GM23248 (cell line): ENCODE measurements at regions of chr10 and their contacts with region 1.

Region 1: DNA sequence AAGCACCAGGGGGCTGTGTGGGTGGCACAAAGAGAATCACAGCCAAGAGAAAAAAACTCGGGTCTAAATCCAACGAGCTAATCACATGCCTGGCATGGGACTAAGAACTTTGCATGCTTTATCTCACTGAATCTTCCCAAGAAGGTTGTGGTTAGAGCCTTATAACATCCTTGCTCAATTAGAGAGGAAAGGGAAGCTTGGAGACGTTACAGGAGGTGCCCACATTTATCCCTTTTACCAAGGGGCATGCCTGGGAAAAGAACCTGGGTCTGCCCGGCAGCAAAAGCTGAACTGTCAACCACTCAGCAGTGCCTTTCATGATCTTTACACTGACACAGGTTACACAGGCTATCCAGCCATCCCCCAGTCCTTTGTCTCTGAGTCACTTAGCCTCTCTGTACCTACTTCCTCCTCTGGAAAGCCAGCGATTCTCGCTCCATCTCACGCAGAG is 190.1 kb downstream of the PRPF18 start:
- DNase-seq: peak; percentile 73
- H3K4me3 ChIP-seq: no peak overlapping the region
- H3K27ac ChIP-seq: peak overlapping the region; percentile 68
- H3K4me1 ChIP-seq: peaks cover 27% of the 10 kb centered on the region
- H3K27me3 ChIP-seq: no peaks in the 10 kb centered on the region

Region 2: DNA sequence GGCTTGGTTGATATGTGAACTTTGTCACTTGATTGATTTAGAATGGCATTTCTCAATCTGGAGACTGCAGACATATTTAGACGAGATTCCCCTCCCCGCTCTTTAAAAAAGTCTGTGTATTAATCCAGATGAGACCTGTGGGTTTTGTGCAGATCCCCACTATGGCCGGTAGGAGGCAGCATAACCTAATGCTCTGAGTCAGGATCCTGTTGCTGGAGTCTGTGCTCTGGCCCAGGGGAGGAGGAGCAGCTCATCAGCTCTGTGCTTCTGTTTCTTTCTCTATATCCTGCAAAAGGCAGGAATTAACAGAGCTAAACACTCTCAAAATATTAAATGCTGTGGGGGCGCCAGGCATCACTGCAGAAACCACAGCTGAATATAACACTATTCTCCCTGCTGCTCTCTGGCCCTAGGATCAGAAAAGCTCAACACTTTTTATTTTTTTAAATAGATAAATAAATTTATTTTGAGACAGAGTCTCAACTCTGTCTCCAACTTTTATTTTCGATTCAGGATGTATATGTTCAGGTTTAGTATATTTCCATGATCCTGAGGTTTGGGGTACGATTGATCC is 404.9 kb before region 1 on chr10:
- in situ Hi-C with region 1: loop called (anchors 10 kb)
- DNase-seq: peak; percentile 84
- H3K4me3 ChIP-seq: no peak overlapping the region
- H3K27ac ChIP-seq: no peak overlapping the region
- H3K4me1 ChIP-seq: no peaks in the 10 kb centered on the region
- H3K27me3 ChIP-seq: peaks cover 14% of the 10 kb centered on the region; the same call in 1 of the 2 replicates

Region 3: GRCh38 chr10:13648425-13648824 is 128.5 kb before region 1 on chr10:
- in situ Hi-C with region 1: no loop called
- DNase-seq: no peak
- H3K4me3 ChIP-seq: no peak overlapping the region
- H3K27ac ChIP-seq: no peak overlapping the region
- H3K4me1 ChIP-seq: no peaks in the 10 kb centered on the region
- H3K27me3 ChIP-seq: no peaks in the 10 kb centered on the region